GM12878 (cell line): ENCODE measurements at regions of chr22 and their contacts with region 1.

Region 1: GRCh38 chr22:17171313-17172171 is 12.5 kb upstream of the HDHD5 start:
- DNase-seq: no peak
- ATAC-seq: peak; percentile 97
- H3K4me3 ChIP-seq: peak overlapping the region; percentile 86
- H3K27ac ChIP-seq: peak overlapping the region; percentile 81
- H3K4me1 ChIP-seq: peaks cover 6% of the 10 kb centered on the region
- H3K27me3 ChIP-seq: no peaks in the 10 kb centered on the region
- CTCF ChIP-seq: peak; percentile 82 to 96 (median 85)
- EP300 ChIP-seq: no peak
- POLR2A ChIP-seq: peak; percentile 63; the same call in 1 of the 2 replicates
- RAD21 ChIP-seq: peak; percentile 65

Region 2: GRCh38 chr22:17077255-17077654 is 94.3 kb before region 1 on chr22:
- CTCF ChIA-PET with region 1: interaction called, 21 read pairs
- POLR2A ChIA-PET with region 1: no interaction called
- RAD21 ChIA-PET with region 1: interaction called, 6 read pairs
- SMC1A ChIA-PET with region 1: interaction called, 7 read pairs
- in situ Hi-C with region 1: no loop called
- intact Hi-C with region 1: loop called (anchors 1 kb)
- DNase-seq: no peak
- ATAC-seq: no peak
- H3K4me3 ChIP-seq: no peak overlapping the region
- H3K27ac ChIP-seq: no peak overlapping the region
- H3K4me1 ChIP-seq: no peaks in the 10 kb centered on the region
- H3K27me3 ChIP-seq: no peaks in the 10 kb centered on the region
- CTCF ChIP-seq: no peak
- EP300 ChIP-seq: no peak
- POLR2A ChIP-seq: no peak
- RAD21 ChIP-seq: no peak

Region 3: GRCh38 chr22:17188237-17188636 is 16.7 kb after region 1 on chr22:
- CTCF ChIA-PET with region 1: interaction called, 11 read pairs
- POLR2A ChIA-PET with region 1: no interaction called
- RAD21 ChIA-PET with region 1: no interaction called
- SMC1A ChIA-PET with region 1: interaction called, 3 read pairs
- in situ Hi-C with region 1: no loop called
- intact Hi-C with region 1: no loop called
- DNase-seq: no peak
- ATAC-seq: no peak
- H3K4me3 ChIP-seq: no peak overlapping the region
- H3K27ac ChIP-seq: no peak overlapping the region
- H3K4me1 ChIP-seq: no peaks in the 10 kb centered on the region
- H3K27me3 ChIP-seq: no peaks in the 10 kb centered on the region
- CTCF ChIP-seq: no peak
- EP300 ChIP-seq: no peak
- POLR2A ChIP-seq: no peak
- RAD21 ChIP-seq: no peak

Region 4: GRCh38 chr22:17250380-17251090 is 79.0 kb after region 1 on chr22:
- CTCF ChIA-PET with region 1: interaction called, 16 read pairs
- POLR2A ChIA-PET with region 1: interaction called, 3 read pairs
- RAD21 ChIA-PET with region 1: interaction called, 4 read pairs
- SMC1A ChIA-PET with region 1: no interaction called
- in situ Hi-C with region 1: no loop called
- intact Hi-C with region 1: no loop called
- DNase-seq: no peak
- ATAC-seq: peak; percentile 51
- H3K4me3 ChIP-seq: no peak overlapping the region
- H3K27ac ChIP-seq: no peak overlapping the region
- H3K4me1 ChIP-seq: no peaks in the 10 kb centered on the region
- H3K27me3 ChIP-seq: no peaks in the 10 kb centered on the region
- CTCF ChIP-seq: peak in 1 of 3 experiments; percentile 17; a peak in 1 of 6 replicates
- EP300 ChIP-seq: no peak
- POLR2A ChIP-seq: no peak
- RAD21 ChIP-seq: no peak

Region 5: DNA sequence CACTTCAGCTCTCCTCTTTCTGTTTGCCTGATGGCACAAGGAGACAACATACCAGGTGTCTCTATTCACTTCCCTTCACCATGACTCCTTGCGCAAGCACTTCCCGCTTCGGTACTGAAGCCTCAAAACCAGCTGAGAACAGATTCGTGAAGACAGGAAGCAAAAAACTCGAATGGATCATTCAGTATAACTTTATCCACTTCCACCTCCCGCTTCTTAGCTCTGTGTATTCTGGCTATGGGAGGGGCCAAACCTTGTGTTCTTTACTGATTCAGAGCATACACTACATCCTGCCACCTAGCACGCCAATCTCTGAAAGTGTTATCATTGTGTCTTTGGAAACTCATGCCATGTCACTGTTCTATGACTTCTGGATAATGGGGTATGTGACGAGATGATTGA is 109.9 kb after region 1 on chr22:
- CTCF ChIA-PET with region 1: interaction called, 10 read pairs
- POLR2A ChIA-PET with region 1: no interaction called
- RAD21 ChIA-PET with region 1: no interaction called
- SMC1A ChIA-PET with region 1: interaction called, 3 read pairs
- in situ Hi-C with region 1: no loop called
- intact Hi-C with region 1: no loop called
- DNase-seq: no peak
- ATAC-seq: no peak
- H3K4me3 ChIP-seq: no peak overlapping the region
- H3K27ac ChIP-seq: no peak overlapping the region; the same call in 1 of the 2 replicates
- H3K4me1 ChIP-seq: peaks cover 16% of the 10 kb centered on the region
- H3K27me3 ChIP-seq: no peaks in the 10 kb centered on the region
- CTCF ChIP-seq: no peak
- EP300 ChIP-seq: no peak
- POLR2A ChIP-seq: no peak
- RAD21 ChIP-seq: no peak

Region 6: DNA sequence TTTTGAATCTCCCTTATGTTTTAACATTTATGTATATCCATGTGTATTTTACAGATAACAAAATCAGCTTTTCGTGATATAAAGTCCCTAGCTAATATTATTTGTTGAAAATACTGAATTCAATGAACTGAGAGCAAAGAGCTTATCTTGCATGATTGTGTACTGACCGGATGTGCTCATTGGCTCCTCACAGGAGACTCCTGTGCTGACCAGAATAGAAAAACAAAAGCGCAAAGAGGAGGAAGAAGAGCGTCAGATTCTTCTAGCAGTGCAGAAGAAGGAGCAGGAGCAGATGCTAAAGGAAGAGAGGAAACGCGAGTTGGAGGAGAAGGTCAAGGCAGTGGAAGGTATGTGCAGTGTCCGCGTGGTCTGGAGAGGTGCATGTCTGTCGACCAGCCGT is 352.4 kb after region 1 on chr22:
- CTCF ChIA-PET with region 1: interaction called, 13 read pairs
- POLR2A ChIA-PET with region 1: no interaction called
- RAD21 ChIA-PET with region 1: no interaction called
- SMC1A ChIA-PET with region 1: no interaction called
- in situ Hi-C with region 1: no loop called
- intact Hi-C with region 1: no loop called
- DNase-seq: no peak
- ATAC-seq: no peak
- H3K4me3 ChIP-seq: no peak overlapping the region
- H3K27ac ChIP-seq: no peak overlapping the region
- H3K4me1 ChIP-seq: no peaks in the 10 kb centered on the region
- H3K27me3 ChIP-seq: no peaks in the 10 kb centered on the region; a peak in 2 of 4 replicates
- CTCF ChIP-seq: no peak
- EP300 ChIP-seq: no peak
- POLR2A ChIP-seq: no peak
- RAD21 ChIP-seq: no peak

Region 7: GRCh38 chr22:17562906-17563870 is 391.6 kb after region 1 on chr22 and contains the start of gene SLC25A18:
- CTCF ChIA-PET with region 1: no interaction called
- POLR2A ChIA-PET with region 1: no interaction called
- RAD21 ChIA-PET with region 1: no interaction called
- SMC1A ChIA-PET with region 1: no interaction called
- in situ Hi-C with region 1: no loop called
- intact Hi-C with region 1: no loop called
- DNase-seq: no peak
- ATAC-seq: no peak
- H3K4me3 ChIP-seq: no peak within 1 kb of the TSS
- H3K27ac ChIP-seq: no peak within 1 kb of the TSS
- H3K4me1 ChIP-seq: no peaks in the 10 kb centered on the region
- H3K27me3 ChIP-seq: no peaks in the 10 kb centered on the region; a peak in 1 of 4 replicates
- CTCF ChIP-seq: no peak
- EP300 ChIP-seq: no peak
- POLR2A ChIP-seq: no peak
- RAD21 ChIP-seq: no peak
- polyA plus RNA-seq, gene SLC25A18: 0.03 TPM in 1 of 2 experiments, not detected in the other